ENCODE measurements at regions of chr12 and their contacts with region 1.

Region 1: DNA sequence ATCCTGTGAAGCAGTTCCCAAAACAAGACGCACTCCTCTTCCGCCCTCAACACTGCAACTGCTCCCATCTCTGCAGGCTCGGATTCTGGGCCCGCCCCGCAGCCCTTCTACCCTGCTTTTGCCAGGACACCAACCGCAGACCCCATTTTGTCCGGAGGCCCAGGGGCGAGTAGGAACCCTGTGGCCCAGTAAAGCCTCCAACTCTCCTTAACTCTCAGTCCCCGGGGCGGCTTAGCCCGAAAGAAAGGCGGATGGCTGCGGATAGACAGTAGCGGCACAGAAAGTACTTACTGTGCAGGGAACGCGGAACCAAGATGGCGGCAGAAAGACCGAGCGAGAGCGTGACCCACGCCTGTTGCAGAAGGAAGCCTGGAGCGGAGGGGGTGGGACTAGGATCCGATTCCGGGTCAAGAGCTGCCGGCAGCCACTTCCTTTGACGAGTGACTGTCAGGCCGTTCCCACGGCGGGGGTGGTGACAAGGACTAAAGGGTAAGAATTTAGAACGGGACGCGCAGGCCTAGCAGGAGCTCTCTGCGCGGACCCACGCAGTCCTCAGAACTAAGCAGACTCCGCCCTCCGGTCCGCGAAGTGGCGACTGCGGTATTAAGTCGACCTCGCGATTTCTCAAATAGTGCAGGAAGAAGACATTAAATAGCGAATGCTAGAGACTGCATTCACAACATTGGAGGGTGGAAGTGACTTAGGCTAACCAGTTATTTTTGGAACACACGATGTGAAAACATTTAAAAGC is at the start of gene NACA:
- DNase-seq: peak; percentile 96
- H3K4me3 ChIP-seq: peak within 1 kb of the TSS; percentile 74 to 99 (median 96)
- H3K27ac ChIP-seq: peak within 1 kb of the TSS; percentile 94
- H3K4me1 ChIP-seq: peaks cover 28% of the 10 kb centered on the region
- H3K27me3 ChIP-seq: no peaks in the 10 kb centered on the region
- CTCF ChIP-seq: no peak
- total RNA-seq, gene NACA: 727 to 735 TPM

Region 2: DNA sequence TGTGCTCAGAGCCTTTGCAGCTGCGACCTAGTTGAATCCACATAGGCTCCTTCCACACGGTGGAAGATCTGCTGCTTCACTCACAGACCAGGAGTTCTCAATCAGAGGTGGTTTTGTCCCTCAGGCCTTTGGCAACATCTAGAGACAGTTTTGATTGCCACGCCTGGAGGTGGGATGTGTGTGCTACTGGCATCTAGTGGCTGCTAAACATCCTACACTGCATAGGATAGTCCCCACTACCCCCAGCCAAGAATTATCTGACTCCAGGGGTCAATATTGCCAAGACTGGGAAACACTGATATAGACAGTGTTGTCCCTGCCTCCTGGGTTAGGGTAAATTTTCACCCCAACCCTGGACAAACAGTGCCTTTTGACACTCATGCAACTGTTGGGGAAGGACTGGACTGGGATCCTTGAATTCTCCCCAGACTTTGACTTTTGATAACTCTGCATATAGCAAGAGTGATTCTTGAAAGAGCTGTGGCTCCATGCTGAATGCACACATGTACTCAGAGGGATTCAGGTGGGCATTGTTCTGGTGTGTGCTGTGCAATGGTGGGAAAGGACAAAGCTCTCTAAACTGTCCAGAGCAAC is 134.8 kb before region 1 on chr12:
- CTCF ChIA-PET with region 1: no interaction called
- dilution Hi-C with region 1: no loop called
- in situ Hi-C with region 1: no loop called
- intact Hi-C with region 1: no loop called
- DNase-seq: peak; percentile 43
- H3K4me3 ChIP-seq: no peak overlapping the region
- H3K27ac ChIP-seq: no peak overlapping the region
- H3K4me1 ChIP-seq: peaks cover 12% of the 10 kb centered on the region
- H3K27me3 ChIP-seq: no peaks in the 10 kb centered on the region
- CTCF ChIP-seq: peak; percentile 35 to 56

Region 3: GRCh38 chr12:56645717-56646446 is 79.3 kb before region 1 on chr12 and contains the start of gene ATP5F1B:
- CTCF ChIA-PET with region 1: no interaction called
- dilution Hi-C with region 1: no loop called
- in situ Hi-C with region 1: no loop called
- intact Hi-C with region 1: loop called (anchors 1 kb)
- DNase-seq: peak; percentile 100
- H3K4me3 ChIP-seq: peak within 1 kb of the TSS; percentile 67 to 97 (median 67)
- H3K27ac ChIP-seq: peak within 1 kb of the TSS; percentile 90
- H3K4me1 ChIP-seq: peaks cover 20% of the 10 kb centered on the region
- H3K27me3 ChIP-seq: no peaks in the 10 kb centered on the region
- CTCF ChIP-seq: no peak
- total RNA-seq, gene ATP5F1B: 374 to 617 TPM

Region 4: GRCh38 chr12:56695327-56696101 is 29.6 kb before region 1 on chr12:
- CTCF ChIA-PET with region 1: no interaction called
- dilution Hi-C with region 1: no loop called
- in situ Hi-C with region 1: no loop called
- intact Hi-C with region 1: no loop called
- DNase-seq: no peak
- H3K4me3 ChIP-seq: no peak overlapping the region
- H3K27ac ChIP-seq: no peak overlapping the region
- H3K4me1 ChIP-seq: no peaks in the 10 kb centered on the region
- H3K27me3 ChIP-seq: no peaks in the 10 kb centered on the region
- CTCF ChIP-seq: no peak

Measured in mammary epithelial cell (primary cell).